AG04450 (cell line): ENCODE measurements at regions of chr3 and their contacts with region 1.

Region 1: DNA sequence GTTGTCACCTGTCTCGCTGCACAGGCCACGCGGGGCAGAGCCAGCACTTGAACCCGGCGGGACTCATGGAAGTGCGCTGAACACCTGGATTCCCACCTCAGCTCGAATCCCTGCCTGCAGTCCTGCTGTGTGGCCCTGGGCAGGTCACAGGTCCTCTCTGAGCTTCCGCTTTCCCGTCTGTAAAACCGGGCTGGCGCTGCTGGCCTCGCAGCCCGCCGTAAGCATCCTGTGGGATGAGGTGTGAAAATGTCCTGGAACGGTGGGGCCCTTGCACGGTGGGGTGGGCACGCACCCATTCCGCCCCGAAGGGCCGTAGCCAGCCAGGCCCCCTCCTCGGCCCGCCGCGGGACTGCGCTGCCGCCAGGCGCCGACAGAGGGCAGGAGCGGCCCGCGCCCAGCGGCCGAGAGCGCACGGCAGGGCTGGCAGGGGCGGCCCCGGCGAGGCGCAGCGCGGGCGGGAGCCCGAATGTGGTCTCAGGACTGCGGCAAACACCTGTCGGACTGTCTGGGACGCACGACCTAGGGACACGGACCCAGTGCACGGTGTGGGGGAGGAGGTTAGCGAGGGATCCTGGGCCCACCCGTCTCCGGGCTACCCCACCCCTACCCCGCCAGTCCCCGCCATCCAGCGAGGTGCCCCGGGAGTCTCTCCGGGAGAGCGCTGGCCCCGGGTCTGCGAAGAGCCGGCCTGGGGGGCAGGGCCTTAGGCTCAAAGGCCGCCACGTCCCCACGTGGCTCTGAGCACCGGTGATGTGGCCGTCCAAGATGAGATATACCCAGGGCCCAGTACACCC is 40.4 kb downstream of the DNAJB8 start:
- DNase-seq: no peak
- H3K4me3 ChIP-seq: peak overlapping the region; percentile 43
- H3K27ac ChIP-seq: no peak overlapping the region
- H3K27me3 ChIP-seq: peaks cover 9% of the 10 kb centered on the region
- CTCF ChIP-seq: peak; percentile 59

Region 2: GRCh38 chr3:128107834-128108233 is 318.5 kb before region 1 on chr3:
- CTCF ChIA-PET with region 1: interaction called, 4 read pairs
- POLR2A ChIA-PET with region 1: interaction called, 10 read pairs
- DNase-seq: no peak
- H3K4me3 ChIP-seq: no peak overlapping the region
- H3K27ac ChIP-seq: no peak overlapping the region
- H3K27me3 ChIP-seq: no peaks in the 10 kb centered on the region
- CTCF ChIP-seq: no peak

Region 3: GRCh38 chr3:128482666-128483656 is 56.6 kb after region 1 on chr3:
- CTCF ChIA-PET with region 1: interaction called, 13 read pairs
- POLR2A ChIA-PET with region 1: no interaction called
- DNase-seq: peak; percentile 67
- H3K4me3 ChIP-seq: peak overlapping the region; percentile 54
- H3K27ac ChIP-seq: peak overlapping the region; percentile 91
- H3K27me3 ChIP-seq: no peaks in the 10 kb centered on the region
- CTCF ChIP-seq: peak; percentile 31; the same call in 1 of the 2 replicates

Region 4: DNA sequence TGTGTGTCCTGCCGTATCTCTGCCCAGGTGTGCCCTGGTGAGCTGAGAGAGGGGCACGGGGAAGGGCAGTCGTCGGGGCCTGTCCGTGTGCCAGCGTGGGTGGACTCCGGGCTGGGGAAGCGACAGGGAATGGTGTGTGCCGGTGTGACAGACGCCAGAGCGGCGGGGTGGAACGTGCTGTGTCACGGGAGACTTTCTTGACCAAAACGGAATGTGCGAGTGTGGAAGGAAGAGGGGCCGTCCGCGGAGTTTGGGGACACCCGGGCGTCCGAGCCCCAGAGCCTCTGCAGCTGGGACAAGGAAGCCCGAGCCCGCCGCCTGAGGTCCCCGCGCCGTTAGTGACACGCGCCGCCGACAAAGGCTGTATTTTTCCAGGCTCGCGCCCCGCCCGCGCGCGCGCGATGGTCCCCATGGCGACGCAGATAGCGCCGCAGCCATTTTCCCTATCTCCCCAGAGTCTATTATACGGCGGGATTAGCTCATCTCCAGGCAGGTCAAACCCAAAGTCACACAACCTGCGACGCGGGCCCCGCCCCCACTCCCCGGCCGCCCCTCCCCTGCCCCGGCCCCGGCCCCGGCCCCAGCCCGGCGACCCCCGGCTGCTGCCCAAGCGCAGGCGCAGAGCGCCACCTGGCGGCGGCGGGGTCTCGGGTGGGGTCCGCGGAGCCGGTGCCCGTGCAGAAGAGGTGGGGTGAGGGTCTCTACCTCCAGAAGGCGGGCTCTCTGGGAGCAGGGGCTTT is 71.2 kb after region 1 on chr3:
- CTCF ChIA-PET with region 1: interaction called, 47 read pairs
- POLR2A ChIA-PET with region 1: no interaction called
- DNase-seq: no peak
- H3K4me3 ChIP-seq: peak overlapping the region; percentile 64
- H3K27ac ChIP-seq: peak overlapping the region; percentile 2
- H3K27me3 ChIP-seq: peaks cover 6% of the 10 kb centered on the region
- CTCF ChIP-seq: peak; percentile 62

Region 5: GRCh38 chr3:128584412-128585020 is 158.2 kb after region 1 on chr3:
- CTCF ChIA-PET with region 1: interaction called, 21 read pairs
- POLR2A ChIA-PET with region 1: no interaction called
- DNase-seq: peak; percentile 32
- H3K4me3 ChIP-seq: no peak overlapping the region
- H3K27ac ChIP-seq: no peak overlapping the region
- H3K27me3 ChIP-seq: peaks cover 21% of the 10 kb centered on the region
- CTCF ChIP-seq: peak; percentile 73